HEK293 (cell line): ENCODE measurements at regions of chr17 and their contacts with region 1.

Region 1: GRCh38 chr17:63848834-63849700 is 6.6 kb upstream of the SMARCD2 start:
- H3K4me3 ChIP-seq: peak overlapping the region; percentile 1
- H3K27ac ChIP-seq: peak overlapping the region; percentile 56; the same call in 1 of the 2 replicates
- H3K4me1 ChIP-seq: no peaks in the 10 kb centered on the region
- CTCF ChIP-seq: peak; percentile 24; the same call in 1 of the 2 replicates

Region 2: DNA sequence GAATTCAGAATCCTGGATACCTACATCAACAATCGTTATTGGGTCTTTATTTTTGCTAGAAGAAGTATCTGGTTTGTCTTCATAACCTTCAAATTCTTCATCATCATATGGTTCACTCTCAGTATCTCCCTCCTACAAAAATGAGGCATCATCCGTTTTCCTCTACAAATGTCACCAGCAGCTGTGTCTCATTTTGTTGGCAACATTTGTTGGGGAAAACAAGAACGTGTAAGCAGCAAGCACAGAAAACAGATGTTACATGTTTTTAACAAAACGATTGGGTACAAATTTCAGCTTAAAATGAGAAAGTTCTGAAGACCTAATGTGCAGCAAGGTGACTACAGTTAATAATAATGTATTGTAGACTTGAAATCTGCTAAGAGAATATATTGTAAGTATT is 84.4 kb before region 1 on chr17:
- CTCF ChIA-PET with region 1: no interaction called
- POLR2A ChIA-PET with region 1: no interaction called
- H3K4me3 ChIP-seq: no peak overlapping the region
- H3K27ac ChIP-seq: no peak overlapping the region
- H3K4me1 ChIP-seq: no peaks in the 10 kb centered on the region
- CTCF ChIP-seq: no peak

Region 3: GRCh38 chr17:63820963-63821589 is 28.0 kb before region 1 on chr17:
- CTCF ChIA-PET with region 1: no interaction called
- POLR2A ChIA-PET with region 1: no interaction called
- H3K4me3 ChIP-seq: no peak overlapping the region
- H3K27ac ChIP-seq: no peak overlapping the region
- H3K4me1 ChIP-seq: peaks cover 2% of the 10 kb centered on the region; the same call in 1 of the 2 replicates
- CTCF ChIP-seq: no peak

Region 4: DNA sequence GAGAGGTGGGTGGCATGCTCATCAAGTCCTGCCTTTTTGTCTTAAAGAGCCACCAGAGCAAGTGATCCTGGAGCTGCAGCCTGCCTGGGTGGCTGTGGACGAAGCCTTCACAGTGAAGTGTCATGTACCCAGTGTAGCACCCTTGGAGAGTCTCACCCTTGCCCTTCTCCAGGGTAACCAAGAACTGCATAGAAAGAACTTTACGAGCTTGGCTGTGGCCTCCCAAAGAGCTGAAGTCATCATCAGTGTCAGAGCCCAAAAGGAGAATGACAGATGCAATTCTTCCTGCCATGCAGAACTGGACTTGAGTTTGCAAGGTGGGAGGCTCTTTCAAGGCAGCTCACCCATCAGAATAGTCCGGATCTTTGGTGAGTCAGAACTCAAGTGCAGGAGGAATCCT is 10.2 kb after region 1 on chr17:
- CTCF ChIA-PET with region 1: interaction called, 62 read pairs
- POLR2A ChIA-PET with region 1: no interaction called
- H3K4me3 ChIP-seq: no peak overlapping the region
- H3K27ac ChIP-seq: no peak overlapping the region
- H3K4me1 ChIP-seq: no peaks in the 10 kb centered on the region
- CTCF ChIP-seq: no peak

Region 5: GRCh38 chr17:63998050-63998720 is 149.1 kb after region 1 on chr17 and contains the start of gene PRR29:
- CTCF ChIA-PET with region 1: no interaction called
- POLR2A ChIA-PET with region 1: no interaction called
- H3K4me3 ChIP-seq: peak within 1 kb of the TSS; percentile 70
- H3K27ac ChIP-seq: no peak within 1 kb of the TSS; the same call in 1 of the 2 replicates
- H3K4me1 ChIP-seq: no peaks in the 10 kb centered on the region
- CTCF ChIP-seq: no peak